ENCODE measurements at regions of chr7 and their contacts with region 1.

Region 1: DNA sequence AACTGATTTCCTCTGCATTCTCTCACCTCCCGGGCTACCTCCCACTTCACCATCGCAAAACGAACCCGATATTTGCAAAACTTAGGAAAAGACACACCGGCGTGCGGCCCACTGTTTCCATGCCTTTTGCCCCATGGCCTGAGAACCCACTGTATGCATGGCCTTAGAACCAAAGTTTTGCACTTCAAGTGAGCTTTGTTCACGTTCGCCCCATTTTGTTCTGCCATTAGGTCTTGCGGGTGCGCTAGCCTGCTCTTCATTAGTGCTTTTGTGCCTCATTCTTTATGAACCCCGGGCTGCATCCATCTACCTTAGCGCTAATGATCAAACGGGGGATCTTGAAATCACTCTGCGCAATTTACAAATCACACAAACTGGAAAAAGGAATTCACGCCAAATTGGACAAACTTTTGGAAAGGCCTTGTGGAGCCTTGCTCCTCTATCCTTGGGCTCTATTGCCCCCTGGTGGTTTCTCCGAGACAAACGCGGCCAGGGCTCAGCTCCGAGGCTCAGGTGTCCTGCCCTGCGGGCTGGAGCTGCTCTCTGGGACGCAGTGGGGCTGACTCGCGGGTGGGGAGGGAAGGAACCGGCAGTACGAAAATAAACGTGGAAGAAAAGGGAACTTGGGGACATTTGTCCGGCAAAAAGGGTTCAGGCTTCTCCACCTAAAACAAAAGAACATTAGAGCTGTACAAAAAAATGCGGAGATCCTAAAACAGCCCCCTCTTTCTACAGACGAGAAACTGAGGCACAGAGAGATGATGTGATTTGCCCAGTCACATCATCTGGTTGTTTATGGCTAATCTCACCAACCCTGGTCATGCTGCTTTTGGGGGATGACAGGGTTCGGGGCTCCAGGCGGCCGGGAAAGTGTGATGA is 300.4 kb upstream of the NFE2L3 start:
- DNase-seq: peak; percentile 64
- H3K4me3 Mint-ChIP-seq: peak overlapping the region; percentile 77
- H3K27ac Mint-ChIP-seq: peak overlapping the region; percentile 83
- H3K4me1 Mint-ChIP-seq: peaks cover 17% of the 10 kb centered on the region
- H3K27me3 Mint-ChIP-seq: peaks cover 35% of the 10 kb centered on the region

Region 2: DNA sequence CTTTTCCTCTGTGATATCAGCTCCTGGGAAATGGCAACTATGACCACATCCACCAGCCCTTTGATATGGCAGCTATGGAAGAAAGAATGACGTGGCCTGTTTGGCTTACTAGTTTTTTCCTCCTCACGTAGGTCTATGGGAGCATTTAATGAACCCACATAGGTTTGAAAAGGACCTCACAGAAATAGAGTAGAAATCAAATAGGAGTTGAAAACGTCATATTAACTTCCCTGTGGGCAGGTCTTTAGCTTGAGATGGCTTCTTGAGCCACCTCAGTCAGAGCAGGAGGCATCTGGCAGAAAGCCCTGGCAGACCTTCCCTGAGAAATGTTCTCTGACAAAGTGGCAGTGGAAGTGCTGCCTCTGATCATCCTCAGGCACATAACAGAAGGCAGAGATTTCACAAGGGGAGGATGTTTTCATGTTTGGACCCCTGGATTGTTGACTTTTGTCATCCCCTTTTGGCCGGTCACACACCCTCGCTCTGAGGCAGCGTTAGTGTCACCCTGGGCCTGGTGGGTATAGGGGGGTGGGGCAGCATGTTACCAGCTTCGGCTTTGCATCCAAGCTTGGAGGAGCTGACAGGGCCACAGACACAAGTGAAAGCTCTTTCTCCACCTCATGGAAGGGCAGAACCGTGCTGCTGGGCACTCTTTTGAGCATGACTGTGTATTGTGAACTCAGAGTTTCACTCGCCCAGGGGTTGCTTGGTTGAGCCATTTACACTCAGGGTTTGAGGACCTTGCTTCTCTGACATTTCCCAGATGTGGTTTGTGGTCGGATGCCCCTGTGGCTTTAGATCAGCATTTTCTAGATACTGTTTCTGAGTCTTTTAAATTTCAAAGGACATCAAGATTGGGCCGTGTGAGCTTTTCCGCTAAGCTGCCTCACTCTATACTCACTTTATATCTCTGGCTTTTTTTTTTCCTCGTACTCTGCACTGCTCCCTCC is 1957.4 kb before region 1 on chr7:
- intact Hi-C with region 1: loop called (anchors 10 kb)
- DNase-seq: peak; percentile 24
- H3K4me3 Mint-ChIP-seq: peak overlapping the region; percentile 41
- H3K27ac Mint-ChIP-seq: peak overlapping the region; percentile 65
- H3K4me1 Mint-ChIP-seq: peaks cover 35% of the 10 kb centered on the region
- H3K27me3 Mint-ChIP-seq: peaks cover 9% of the 10 kb centered on the region

Region 3: GRCh38 chr7:25179771-25180591 is 671.6 kb before region 1 on chr7:
- intact Hi-C with region 1: loop called (anchors 5 kb)
- DNase-seq: peak; percentile 91
- H3K4me3 Mint-ChIP-seq: peak overlapping the region; percentile 80
- H3K27ac Mint-ChIP-seq: peak overlapping the region; percentile 53
- H3K4me1 Mint-ChIP-seq: peaks cover 16% of the 10 kb centered on the region
- H3K27me3 Mint-ChIP-seq: peaks cover 14% of the 10 kb centered on the region

Region 4: DNA sequence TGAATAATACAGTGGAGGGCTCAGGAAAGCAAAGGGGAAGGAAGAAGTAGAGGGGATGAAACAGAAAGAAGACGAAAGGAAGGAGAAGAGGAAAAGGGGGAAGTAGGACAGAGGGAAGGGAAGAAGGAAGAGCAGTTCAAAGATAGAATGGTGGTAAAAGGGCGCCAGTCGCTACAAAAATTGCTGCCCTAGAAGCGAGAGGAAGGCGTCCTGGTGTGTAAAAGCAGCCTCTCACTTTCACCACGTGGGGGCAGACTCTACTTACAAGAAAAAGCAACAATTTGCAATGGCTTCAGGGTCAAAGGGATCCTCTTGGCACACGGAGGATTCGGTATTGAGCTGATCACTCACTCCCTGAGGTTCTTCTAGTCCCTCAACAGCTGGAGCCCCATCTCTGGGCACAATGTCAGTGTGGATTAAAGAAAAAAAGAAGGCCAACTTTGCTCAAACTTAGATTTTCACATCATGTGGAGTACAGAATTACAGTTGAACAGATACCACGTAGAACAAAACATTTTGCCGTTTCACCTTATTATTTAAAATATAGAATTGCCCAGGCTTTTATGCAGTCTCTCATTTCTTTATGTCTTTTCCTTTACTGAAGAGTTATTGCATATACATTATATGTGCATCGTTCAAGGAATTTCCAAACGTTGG is 591.9 kb before region 1 on chr7:
- intact Hi-C with region 1: loop called (anchors 1 kb)
- DNase-seq: peak; percentile 40
- H3K4me3 Mint-ChIP-seq: no peak overlapping the region
- H3K27ac Mint-ChIP-seq: no peak overlapping the region
- H3K4me1 Mint-ChIP-seq: peaks cover 27% of the 10 kb centered on the region
- H3K27me3 Mint-ChIP-seq: peaks cover 4% of the 10 kb centered on the region

Region 5: GRCh38 chr7:25389489-25390106 is 462.0 kb before region 1 on chr7:
- intact Hi-C with region 1: loop called (anchors 2 kb)
- DNase-seq: no peak
- H3K4me3 Mint-ChIP-seq: no peak overlapping the region
- H3K27ac Mint-ChIP-seq: no peak overlapping the region
- H3K4me1 Mint-ChIP-seq: no peaks in the 10 kb centered on the region
- H3K27me3 Mint-ChIP-seq: peaks cover 20% of the 10 kb centered on the region

Region 6: DNA sequence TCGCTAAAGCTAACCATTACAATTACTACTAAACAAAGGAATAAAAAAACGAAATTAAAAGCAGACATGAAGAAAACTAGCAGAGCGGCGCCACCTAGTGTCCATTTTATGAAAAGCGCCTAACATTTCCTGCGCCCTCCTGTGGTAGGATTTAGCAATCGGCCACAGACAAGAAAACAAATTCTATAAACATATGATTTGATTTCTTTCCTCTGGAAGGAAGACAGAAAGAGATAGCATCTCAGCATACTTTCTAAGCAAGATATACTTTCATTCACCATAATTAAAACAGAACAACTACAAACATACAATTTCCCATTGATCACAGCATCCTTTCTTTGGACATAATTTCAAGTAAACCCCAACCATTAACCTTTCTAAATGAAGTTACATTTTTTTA is 285.6 kb before region 1 on chr7:
- intact Hi-C with region 1: loop called (anchors 1 kb)
- DNase-seq: peak; percentile 44
- H3K4me3 Mint-ChIP-seq: no peak overlapping the region
- H3K27ac Mint-ChIP-seq: no peak overlapping the region
- H3K4me1 Mint-ChIP-seq: peaks cover 11% of the 10 kb centered on the region
- H3K27me3 Mint-ChIP-seq: peaks cover 9% of the 10 kb centered on the region

Region 7: DNA sequence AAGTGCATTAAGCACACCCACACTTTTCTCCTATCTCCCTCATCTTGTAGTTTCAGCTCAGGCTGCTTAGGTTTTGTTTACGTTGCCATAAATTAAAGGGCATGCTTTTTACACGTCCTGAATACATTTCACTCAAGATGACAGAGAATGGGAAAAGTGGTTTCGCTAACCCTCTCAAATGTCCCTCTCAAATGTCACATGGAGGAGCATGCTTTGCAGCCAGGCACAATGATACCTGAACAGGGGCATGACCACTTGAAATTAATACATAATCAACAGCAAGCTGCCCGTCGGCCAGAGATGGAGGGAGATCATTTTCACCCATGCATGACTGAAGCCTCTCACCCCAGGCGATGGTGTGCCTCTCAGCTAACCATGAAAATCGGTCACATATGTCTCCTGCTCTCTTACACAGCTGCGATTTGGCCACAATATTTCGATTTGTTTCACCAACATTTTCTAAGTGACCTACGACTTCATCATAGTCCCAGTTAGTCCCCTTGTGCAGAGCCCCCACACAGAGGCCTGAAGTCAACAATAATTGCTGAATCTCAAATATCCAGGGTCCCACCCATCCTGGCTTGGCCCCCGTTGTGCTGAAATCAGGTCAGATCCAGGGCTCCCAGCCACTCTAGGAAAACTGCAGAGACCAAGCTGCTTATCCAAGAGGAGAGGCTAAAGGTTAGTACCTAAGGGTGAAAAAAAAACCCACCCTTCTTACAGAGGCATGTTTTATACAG is 73.4 kb before region 1 on chr7:
- intact Hi-C with region 1: no loop called
- DNase-seq: no peak
- H3K4me3 Mint-ChIP-seq: no peak overlapping the region
- H3K27ac Mint-ChIP-seq: no peak overlapping the region
- H3K4me1 Mint-ChIP-seq: no peaks in the 10 kb centered on the region
- H3K27me3 Mint-ChIP-seq: peaks cover 5% of the 10 kb centered on the region

Region 8: GRCh38 chr7:25968205-25968993 is 116.8 kb after region 1 on chr7:
- intact Hi-C with region 1: no loop called
- DNase-seq: peak; percentile 26
- H3K4me3 Mint-ChIP-seq: peak overlapping the region; percentile 4
- H3K27ac Mint-ChIP-seq: peak overlapping the region; percentile 69
- H3K4me1 Mint-ChIP-seq: peaks cover 33% of the 10 kb centered on the region
- H3K27me3 Mint-ChIP-seq: peaks cover 25% of the 10 kb centered on the region

Region 9: DNA sequence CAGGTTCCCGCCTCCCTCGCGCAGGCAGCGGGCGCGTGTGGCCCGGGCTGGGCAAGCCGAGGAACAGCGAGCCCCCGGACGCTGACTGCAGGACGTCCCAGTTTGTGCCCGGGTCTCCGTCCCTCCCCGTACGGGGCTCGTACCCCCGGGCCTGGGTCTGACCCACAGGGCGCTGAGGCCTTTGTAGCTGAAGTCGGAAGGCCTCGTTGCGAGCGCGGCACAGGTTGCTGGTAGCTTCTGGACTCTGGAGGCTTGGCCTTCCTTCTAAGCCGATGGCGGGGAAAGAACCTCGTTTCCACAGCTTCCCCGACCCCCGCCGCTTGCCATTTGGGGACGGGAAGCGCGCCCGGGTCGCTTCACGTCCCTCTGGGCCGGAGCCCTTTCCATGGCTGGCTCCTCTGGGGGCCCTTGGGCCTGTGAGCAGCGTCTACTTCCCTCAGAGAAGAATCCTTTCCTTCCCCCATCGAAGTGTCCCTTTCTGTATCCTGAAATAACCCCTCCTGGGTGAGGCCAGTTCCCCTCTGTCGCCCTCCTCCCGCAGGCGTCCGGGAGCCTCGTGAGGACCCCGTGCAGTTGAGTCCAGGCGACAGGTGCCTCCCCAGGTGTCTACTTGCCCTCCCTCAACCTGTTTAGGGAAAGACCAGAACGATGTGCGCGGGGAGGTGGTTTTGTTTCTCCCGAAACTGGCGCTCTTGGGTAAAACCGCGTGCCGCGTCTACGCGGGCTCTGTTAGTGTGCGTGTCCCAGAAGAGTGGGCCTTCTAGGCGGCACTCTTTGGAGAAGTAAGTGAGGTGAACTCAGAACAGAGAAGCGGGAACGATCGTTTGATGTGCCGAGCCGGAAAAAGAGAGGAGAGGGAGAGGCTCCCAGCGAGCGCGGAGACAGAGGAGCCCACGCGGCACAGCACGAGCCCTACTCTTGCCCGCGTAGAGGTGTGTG is 1400.3 kb after region 1 on chr7:
- intact Hi-C with region 1: loop called (anchors 2 kb)
- DNase-seq: no peak
- H3K4me3 Mint-ChIP-seq: no peak overlapping the region
- H3K27ac Mint-ChIP-seq: no peak overlapping the region
- H3K4me1 Mint-ChIP-seq: no peaks in the 10 kb centered on the region
- H3K27me3 Mint-ChIP-seq: peaks cover 74% of the 10 kb centered on the region

Measured in activated T-helper 1 cell treated with anti-CD3 and anti-CD28 coated beads, Interleukin-12 subunit alpha, Interleukin-12 subunit beta, Interleukin-2, Interleukin-4 antibody, amounts not matched to agents 30 ng/mL and 10 ng/mL and 1 ng/mL, durations not matched to agents 14 hours and 24 hours and 36 hours (primary cell).